ENCODE measurements at regions of chr15 and their contacts with region 1.

Region 1: DNA sequence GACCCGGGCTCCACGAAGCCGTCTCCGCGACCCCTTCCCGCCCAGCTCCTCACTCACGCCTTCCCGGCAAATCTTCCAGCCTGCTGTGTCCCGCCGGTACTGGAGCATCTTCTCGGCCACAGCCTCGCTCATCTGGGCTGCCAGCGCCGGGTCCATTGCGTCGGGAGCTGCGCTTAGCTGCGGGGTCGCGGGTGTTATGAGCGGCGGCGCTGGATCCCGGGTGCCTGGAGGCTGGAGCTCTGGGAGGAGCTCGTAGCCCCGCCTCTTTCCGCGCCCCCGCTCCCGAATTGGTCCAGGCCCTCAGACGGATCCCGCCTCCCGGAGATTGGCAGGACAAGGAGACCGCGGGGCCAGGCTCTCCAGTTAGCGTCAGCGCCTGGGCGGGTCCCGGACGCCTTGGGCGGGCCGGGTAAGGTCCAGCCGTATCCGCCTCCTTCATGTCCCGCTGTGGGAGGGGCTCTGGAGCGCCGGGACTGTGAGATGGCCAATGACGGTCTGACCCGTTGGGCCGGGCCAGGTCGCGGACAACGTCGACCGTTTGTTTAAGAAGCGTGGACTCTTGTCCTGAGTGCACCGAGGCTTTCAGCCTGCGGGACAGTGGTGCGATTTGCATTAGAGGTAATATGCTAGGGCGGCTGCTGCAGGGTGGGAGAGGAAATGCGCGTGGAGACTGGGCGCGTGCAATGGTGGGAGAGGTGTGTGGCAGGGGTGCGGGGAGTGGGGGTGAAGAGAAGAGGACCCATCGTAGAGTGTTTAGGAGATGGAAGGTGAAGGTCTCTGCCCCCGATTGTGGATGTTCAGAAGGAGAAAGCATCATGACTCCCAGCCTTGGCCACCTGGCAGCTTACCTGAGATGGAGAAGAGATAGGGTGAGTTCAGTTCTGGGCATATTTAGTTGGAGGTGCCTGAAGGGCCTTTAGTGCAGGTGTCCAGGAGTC is at the start of gene STARD5:
- DNase-seq: peak; percentile 98
- ATAC-seq: peak; percentile 99
- H3K4me3 Mint-ChIP-seq: peak within 1 kb of the TSS; percentile 95
- H3K27ac Mint-ChIP-seq: peak within 1 kb of the TSS; percentile 90
- H3K4me1 Mint-ChIP-seq: peaks cover 27% of the 10 kb centered on the region
- H3K27me3 Mint-ChIP-seq: no peaks in the 10 kb centered on the region
- total RNA-seq, gene STARD5: 8.9 to 9.2 TPM

Region 2: GRCh38 chr15:81163961-81164800 is 160.0 kb before region 1 on chr15:
- CTCF ChIA-PET with region 1: no interaction called
- POLR2A ChIA-PET with region 1: no interaction called
- intact Hi-C with region 1: no loop called
- DNase-seq: no peak
- ATAC-seq: no peak
- H3K4me3 Mint-ChIP-seq: no peak overlapping the region
- H3K27ac Mint-ChIP-seq: no peak overlapping the region
- H3K4me1 Mint-ChIP-seq: peaks cover 19% of the 10 kb centered on the region
- H3K27me3 Mint-ChIP-seq: peaks cover 9% of the 10 kb centered on the region

Region 3: DNA sequence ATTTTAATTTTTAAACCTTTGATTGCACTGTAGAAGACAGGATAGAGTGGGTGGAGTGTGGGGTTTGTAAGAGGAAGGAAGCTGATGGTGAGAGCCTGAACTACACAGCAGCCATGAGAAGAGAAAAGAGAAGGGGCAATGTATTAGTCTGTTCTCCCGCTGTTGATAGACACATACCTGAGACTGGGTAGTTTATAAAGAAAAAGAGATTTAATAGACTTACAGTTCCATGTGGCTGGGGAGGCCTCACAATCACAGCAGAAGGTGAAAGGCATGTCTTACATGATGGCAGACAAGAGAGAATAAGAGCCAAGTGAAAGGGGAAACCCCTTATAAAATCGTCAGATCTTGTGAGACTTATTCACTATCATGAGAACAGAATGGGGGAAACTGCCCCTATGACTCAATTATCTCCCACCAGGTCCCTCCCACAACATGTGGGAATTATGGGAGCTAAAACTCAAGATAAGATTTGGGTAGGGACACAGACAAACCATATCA is 37.5 kb before region 1 on chr15:
- CTCF ChIA-PET with region 1: interaction called, 6 read pairs
- POLR2A ChIA-PET with region 1: interaction called, 23 read pairs
- intact Hi-C with region 1: loop called in 1 of 2 experiments (anchors 5 kb)
- DNase-seq: no peak
- ATAC-seq: peak; percentile 83
- H3K4me3 Mint-ChIP-seq: peak overlapping the region; percentile 71
- H3K27ac Mint-ChIP-seq: peak overlapping the region; percentile 97
- H3K4me1 Mint-ChIP-seq: peaks cover 77% of the 10 kb centered on the region
- H3K27me3 Mint-ChIP-seq: no peaks in the 10 kb centered on the region

Region 4: GRCh38 chr15:81301815-81302399 is 22.3 kb before region 1 on chr15:
- CTCF ChIA-PET with region 1: interaction called, 7 read pairs
- POLR2A ChIA-PET with region 1: interaction called, 8 read pairs
- intact Hi-C with region 1: loop called in 1 of 2 experiments (anchors 1 kb)
- DNase-seq: peak; percentile 67
- ATAC-seq: peak; percentile 45
- H3K4me3 Mint-ChIP-seq: peak overlapping the region; percentile 94
- H3K27ac Mint-ChIP-seq: peak overlapping the region; percentile 98
- H3K4me1 Mint-ChIP-seq: peaks cover 66% of the 10 kb centered on the region
- H3K27me3 Mint-ChIP-seq: no peaks in the 10 kb centered on the region

Region 5: GRCh38 chr15:81347910-81348309 is 23.7 kb after region 1 on chr15:
- CTCF ChIA-PET with region 1: no interaction called
- POLR2A ChIA-PET with region 1: no interaction called
- intact Hi-C with region 1: no loop called
- DNase-seq: no peak
- ATAC-seq: no peak
- H3K4me3 Mint-ChIP-seq: no peak overlapping the region
- H3K27ac Mint-ChIP-seq: no peak overlapping the region
- H3K4me1 Mint-ChIP-seq: peaks cover 7% of the 10 kb centered on the region
- H3K27me3 Mint-ChIP-seq: no peaks in the 10 kb centered on the region